MCF 10A (cell line): ENCODE measurements at regions of chr18 and their contacts with region 1.

Region 1: DNA sequence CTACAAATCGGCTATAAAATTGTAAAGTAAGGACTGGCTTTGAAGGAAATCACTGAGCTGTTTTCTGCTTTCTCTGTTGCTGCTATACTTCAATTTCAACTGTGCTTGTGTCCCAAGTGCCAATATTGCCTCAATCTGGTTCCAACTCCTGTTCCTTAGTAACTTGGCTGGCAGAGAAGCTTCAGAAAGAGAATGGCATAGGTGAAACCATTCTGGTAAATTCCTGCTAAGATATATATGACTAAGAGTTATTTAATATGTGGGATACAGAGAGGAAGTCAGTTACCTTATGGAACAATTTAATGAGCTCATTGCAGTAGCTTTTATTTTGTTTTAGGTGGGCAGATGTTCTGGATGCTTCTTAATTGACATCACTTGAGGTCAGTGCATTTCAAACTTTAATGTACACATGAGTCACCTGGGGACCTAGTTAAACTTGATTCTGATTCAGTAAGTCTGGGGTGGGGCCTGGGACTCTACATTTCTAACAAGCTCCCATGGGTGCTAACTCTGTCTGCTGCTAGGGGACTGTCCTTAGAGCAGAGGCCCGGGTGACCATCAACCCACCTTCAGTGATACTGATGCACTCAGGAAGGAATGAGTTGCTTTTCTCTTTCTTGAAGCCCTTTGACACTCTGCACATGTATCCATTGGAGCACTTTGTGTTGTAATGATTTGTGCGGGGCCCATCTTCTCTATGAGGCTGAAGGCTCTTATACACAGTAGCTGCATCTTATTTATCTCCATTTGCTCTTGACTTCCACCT is 47.6 kb downstream of the LIPG start:
- DNase-seq: peak; percentile 60
- H3K4me3 Mint-ChIP-seq: no peak overlapping the region
- H3K27ac Mint-ChIP-seq: peak overlapping the region; percentile 91
- H3K4me1 Mint-ChIP-seq: peaks cover 44% of the 10 kb centered on the region
- H3K27me3 Mint-ChIP-seq: no peaks in the 10 kb centered on the region
- CTCF ChIP-seq: no peak

Region 2: DNA sequence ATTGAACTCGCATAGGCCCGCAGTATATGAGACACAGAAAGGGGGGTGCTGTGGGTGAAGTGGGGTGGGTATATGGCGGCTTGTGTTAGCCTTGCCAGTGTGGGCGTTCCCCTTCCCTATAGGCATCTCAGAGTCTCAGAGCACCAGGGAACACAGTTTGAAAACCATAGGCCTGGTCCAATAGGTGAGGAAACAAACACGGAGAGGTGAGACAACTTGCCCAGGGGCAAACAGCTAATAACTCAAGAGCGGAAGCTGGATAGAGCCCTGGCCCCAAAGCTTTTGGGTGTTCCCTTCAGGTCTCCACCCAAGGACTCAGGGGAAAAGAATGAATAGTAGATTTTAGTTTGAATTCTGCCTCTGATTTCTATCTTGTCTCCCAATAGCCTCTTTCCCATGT is 39.7 kb before region 1 on chr18:
- CTCF ChIA-PET with region 1: no interaction called
- POLR2A ChIA-PET with region 1: interaction called, 12 read pairs
- intact Hi-C with region 1: loop called (anchors 1 kb)
- DNase-seq: peak; percentile 65
- H3K4me3 Mint-ChIP-seq: peak overlapping the region; percentile 19
- H3K27ac Mint-ChIP-seq: peak overlapping the region; percentile 68
- H3K4me1 Mint-ChIP-seq: peaks cover 27% of the 10 kb centered on the region
- H3K27me3 Mint-ChIP-seq: no peaks in the 10 kb centered on the region
- CTCF ChIP-seq: no peak

Region 3: GRCh38 chr18:49656073-49656591 is 46.7 kb after region 1 on chr18:
- CTCF ChIA-PET with region 1: interaction called, 4 read pairs
- POLR2A ChIA-PET with region 1: interaction called, 5 read pairs
- intact Hi-C with region 1: loop called (anchors 5 kb)
- DNase-seq: peak; percentile 75
- H3K4me3 Mint-ChIP-seq: no peak overlapping the region
- H3K27ac Mint-ChIP-seq: peak overlapping the region; percentile 42
- H3K4me1 Mint-ChIP-seq: peaks cover 9% of the 10 kb centered on the region
- H3K27me3 Mint-ChIP-seq: peaks cover 11% of the 10 kb centered on the region
- CTCF ChIP-seq: no peak